ENCODE measurements at regions of chr3 and their contacts with region 1.

Region 1: GRCh38 chr3:13648060-13649001 is 99.4 kb downstream of the FBLN2 start:
- DNase-seq: peak; percentile 54
- H3K4me3 Mint-ChIP-seq: no peak overlapping the region
- H3K27ac Mint-ChIP-seq: no peak overlapping the region
- H3K4me1 Mint-ChIP-seq: peaks cover 3% of the 10 kb centered on the region
- H3K27me3 Mint-ChIP-seq: peaks cover 30% of the 10 kb centered on the region

Region 2: DNA sequence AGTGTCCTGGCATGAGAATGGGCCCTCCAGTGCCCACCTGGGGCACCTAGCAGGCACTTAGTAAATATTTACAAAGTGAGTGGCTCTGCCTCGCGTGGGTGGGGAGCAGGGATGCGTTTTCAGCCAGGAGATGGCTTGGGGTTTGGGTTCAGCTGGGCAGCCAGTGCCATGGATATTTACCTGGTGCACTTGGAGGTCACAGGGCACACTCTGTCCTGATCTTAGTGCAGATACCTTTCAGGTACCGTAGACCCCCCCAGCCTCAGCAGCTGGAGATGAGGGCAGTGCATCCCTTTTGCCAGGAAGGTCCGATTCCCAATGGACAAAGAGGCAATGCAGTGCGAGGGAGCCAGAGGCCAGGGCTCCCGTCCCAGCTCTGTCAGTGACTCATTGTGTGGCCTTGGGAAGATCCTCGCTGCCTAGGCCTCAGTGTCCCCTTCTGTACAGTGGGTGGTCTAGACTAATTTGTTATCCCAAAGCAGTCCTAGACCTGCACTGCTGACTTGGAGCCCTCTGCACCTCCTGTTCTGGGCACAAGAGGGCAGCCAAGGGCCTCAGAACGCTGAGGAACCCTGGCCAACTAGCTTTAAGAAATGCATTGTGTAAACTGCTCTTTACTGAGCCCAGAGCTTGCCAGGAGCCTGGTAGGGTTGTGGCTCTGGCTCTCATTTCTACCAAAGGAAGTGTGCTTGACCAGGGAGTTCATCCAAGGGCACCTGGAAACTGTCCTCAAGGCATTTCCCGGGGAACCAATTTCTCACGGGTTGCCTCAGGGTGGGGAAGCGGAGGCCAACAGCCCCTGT is 152.2 kb before region 1 on chr3:
- intact Hi-C with region 1: loop called (anchors 1 kb)
- DNase-seq: peak; percentile 60
- H3K4me3 Mint-ChIP-seq: no peak overlapping the region
- H3K27ac Mint-ChIP-seq: no peak overlapping the region
- H3K4me1 Mint-ChIP-seq: peaks cover 2% of the 10 kb centered on the region
- H3K27me3 Mint-ChIP-seq: no peaks in the 10 kb centered on the region